Activated naive CD4-positive, alpha-beta T cell treated with anti-CD3 and anti-CD28 coated beads for 36 hours (primary cell): ENCODE measurements at regions of chr20 and their contacts with region 1.

Region 1: DNA sequence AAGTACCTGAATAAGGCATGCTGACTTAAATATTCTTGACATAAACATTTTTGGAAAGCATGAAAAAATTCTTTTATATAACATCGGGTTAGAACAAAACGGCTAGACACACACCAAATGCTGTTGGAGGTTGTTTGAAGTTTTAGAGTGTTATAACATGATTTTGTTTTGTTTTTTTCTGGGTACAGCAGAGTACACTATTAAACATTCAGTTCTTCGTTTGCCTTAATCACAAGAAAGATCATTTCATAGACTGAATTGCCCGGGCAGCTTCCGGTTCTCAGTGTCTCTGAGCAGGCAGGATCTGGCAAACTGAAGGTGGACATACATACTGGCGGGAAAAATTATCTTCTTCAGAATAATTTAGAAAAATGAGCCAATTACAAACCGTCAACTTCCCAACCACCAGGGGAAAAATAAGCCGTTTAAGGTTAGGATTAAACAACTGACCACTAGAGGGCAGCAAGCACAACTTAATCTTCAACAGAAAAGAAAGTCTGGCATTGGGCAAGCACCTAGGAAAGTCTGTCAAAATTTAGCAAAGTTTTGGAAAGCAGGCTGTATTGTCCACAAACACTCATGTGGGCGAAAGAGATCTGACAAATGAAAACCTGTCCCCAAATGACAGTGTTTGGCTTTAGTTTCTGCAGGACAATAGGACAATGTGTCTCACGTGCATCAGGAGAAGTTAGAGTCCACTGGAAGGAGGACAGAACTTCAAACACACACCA is 15.0 kb downstream of the ZNF217 start:
- DNase-seq: peak; percentile 77
- H3K4me3 Mint-ChIP-seq: peak overlapping the region; percentile 71
- H3K27ac Mint-ChIP-seq: peak overlapping the region; percentile 92
- H3K4me1 Mint-ChIP-seq: peaks cover 90% of the 10 kb centered on the region
- H3K27me3 Mint-ChIP-seq: no peaks in the 10 kb centered on the region

Region 2: DNA sequence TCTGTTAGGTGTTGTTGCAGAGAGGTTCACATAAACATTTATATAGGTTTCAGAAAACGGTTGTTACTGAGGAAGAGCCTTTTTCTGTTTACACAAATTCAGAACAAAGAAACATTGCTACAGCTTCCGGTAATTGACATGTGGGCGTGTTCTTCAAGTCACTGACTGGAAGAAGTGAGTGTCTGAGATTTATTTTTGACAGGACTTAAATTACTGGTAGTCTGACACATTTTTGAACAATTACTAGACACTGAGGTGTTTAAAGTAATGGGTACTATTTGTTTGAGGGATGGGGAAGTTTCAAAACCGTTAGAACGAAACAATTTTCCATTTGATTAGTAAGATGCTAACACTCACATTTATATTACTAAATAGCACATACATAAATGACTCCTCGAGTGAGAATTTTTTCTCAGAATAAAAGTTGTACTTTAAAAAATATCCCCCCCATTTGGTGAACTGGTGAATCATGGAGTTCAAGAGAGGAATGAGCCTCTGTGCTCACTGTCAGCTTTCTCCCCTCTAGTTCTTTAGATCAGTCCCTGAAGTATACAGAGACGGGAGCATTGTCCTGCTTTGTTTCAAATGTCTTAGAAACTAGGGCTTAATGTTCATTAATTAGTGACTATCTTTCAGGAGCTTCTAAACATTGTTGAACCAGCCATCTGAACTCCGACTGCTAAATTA is 507.8 kb before region 1 on chr20:
- CTCF ChIA-PET with region 1: no interaction called
- intact Hi-C with region 1: loop called (anchors 5 kb)
- DNase-seq: peak; percentile 80
- H3K4me3 Mint-ChIP-seq: peak overlapping the region; percentile 18
- H3K27ac Mint-ChIP-seq: peak overlapping the region; percentile 98
- H3K4me1 Mint-ChIP-seq: peaks cover 63% of the 10 kb centered on the region
- H3K27me3 Mint-ChIP-seq: no peaks in the 10 kb centered on the region

Region 3: DNA sequence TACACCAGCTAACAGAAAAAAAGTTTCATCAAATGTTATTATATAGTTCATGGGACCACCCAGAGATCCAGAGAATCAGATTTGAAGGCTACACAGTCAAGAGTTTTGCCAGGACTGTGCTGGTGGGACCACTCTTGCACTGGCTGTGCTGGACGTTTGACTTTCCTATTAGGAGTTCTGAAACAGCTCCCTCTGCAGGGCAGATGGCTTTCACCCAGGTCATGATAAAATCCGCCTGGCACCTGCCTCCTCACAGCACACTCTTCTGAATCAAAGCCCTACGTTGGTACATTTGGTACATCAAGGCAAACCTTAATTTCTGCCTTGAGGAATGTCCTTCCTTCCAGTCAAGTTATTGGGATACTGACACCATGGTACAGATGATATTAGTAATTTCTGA is 287.1 kb before region 1 on chr20:
- CTCF ChIA-PET with region 1: no interaction called
- intact Hi-C with region 1: no loop called
- DNase-seq: peak; percentile 13
- H3K4me3 Mint-ChIP-seq: no peak overlapping the region
- H3K27ac Mint-ChIP-seq: no peak overlapping the region
- H3K4me1 Mint-ChIP-seq: no peaks in the 10 kb centered on the region
- H3K27me3 Mint-ChIP-seq: no peaks in the 10 kb centered on the region

Region 4: DNA sequence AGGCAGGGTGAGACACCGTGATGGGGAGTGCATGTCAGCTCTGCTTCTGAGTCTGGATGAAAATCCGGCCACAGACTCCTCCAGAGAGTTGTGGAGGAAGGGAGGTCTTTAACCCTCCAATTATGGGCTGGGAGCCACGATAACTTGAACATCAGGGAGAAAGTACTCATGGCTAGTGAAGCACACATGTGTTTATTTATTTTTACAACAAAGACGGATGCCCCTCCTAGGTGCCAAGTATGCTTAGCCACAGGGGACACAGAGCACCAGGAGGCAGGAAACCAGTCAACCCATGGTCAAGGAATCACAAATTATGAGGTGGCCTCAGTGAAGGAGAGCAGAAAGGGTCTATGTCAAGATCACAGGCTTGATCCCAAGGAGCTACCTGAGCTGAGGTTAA is 39.1 kb before region 1 on chr20:
- CTCF ChIA-PET with region 1: no interaction called
- intact Hi-C with region 1: no loop called
- DNase-seq: no peak
- H3K4me3 Mint-ChIP-seq: no peak overlapping the region
- H3K27ac Mint-ChIP-seq: no peak overlapping the region
- H3K4me1 Mint-ChIP-seq: no peaks in the 10 kb centered on the region
- H3K27me3 Mint-ChIP-seq: no peaks in the 10 kb centered on the region

Region 5: DNA sequence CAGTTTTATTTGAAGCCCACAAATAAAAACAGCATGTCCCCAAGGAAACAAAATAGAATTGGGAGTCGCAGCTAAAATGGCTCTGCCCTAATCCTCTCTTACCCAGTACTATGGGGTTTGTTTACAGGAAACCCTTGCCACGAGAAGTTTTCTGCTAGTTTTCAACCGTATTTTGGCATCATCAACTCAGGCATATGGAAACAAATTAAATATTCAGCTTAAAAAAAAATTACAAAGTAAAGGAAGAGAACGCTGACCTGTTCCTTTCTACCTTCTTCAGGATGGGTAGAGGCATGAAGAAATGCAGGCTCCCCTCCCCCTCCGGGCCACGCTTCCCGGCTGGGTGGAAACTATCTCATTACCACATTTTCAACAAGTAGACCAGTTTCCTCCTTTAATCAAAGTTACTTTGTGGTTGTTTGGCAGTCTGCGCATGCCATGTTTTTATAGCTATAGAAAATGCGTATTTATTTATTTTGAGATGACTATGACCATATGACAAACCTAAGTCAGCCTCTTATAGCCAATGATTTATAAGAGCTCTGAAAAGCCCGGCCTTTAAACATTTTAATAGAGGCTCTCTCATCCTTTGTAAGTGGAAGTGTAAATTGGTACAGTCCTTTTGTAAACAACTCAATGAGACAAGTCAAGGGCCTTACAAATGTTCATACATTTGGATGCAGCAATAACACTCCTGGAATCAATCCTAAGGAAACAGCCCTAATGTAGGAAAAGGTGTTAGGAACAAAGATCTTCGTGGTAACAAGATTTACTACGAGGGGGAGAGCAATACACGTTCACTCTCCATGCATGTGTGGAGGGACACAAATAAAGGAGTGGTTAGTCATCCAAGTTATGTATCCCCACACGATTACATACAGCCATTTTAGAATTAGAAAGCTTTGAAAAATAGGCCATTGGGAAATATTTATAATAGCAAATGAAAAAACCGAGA is 31.1 kb after region 1 on chr20:
- CTCF ChIA-PET with region 1: interaction called, 3 read pairs
- intact Hi-C with region 1: loop called (anchors 1 kb)
- DNase-seq: peak; percentile 91
- H3K4me3 Mint-ChIP-seq: peak overlapping the region; percentile 79
- H3K27ac Mint-ChIP-seq: peak overlapping the region; percentile 98
- H3K4me1 Mint-ChIP-seq: peaks cover 33% of the 10 kb centered on the region
- H3K27me3 Mint-ChIP-seq: no peaks in the 10 kb centered on the region

Region 6: GRCh38 chr20:53652090-53652858 is 73.6 kb after region 1 on chr20:
- CTCF ChIA-PET with region 1: no interaction called
- intact Hi-C with region 1: loop called (anchors 2 kb)
- DNase-seq: peak; percentile 26
- H3K4me3 Mint-ChIP-seq: peak overlapping the region; percentile 65
- H3K27ac Mint-ChIP-seq: peak overlapping the region; percentile 93
- H3K4me1 Mint-ChIP-seq: peaks cover 43% of the 10 kb centered on the region
- H3K27me3 Mint-ChIP-seq: no peaks in the 10 kb centered on the region

Region 7: DNA sequence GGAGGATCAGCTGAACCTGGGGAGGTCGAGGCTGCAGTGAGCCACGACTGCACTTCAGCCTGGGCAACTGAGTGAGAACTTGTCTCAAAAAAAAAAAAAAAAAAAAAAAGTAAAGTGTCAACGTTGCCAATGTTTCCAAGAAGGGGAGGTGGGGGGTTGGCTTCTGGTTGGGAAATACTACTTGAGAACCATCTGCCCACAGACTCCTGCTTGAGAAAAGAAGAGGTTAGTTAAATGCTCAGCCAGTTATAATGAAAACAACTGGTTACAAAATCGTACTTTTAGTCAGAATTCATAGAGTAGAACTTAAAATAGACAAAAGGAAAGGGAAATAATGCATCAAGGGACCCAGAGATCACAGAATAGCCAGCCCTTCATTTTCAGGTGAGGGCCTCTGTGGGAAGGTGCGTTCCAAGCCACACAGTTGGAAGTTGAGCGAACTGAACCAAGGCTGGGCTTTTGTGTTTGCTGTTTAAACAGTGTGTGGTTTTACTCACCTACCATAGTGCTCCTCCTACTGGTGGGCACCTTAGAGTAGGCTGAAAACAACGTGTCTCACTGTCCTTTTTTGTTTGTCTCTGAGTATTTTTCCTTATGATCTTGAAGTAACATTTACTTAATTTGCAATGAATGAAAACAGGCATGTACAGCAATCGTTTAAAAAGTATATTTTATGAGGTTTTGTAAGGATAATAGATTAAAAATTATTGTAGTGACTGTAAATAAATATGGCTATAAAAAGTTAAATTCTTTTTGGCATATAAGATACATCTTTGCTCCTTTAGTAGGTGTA is 291.0 kb after region 1 on chr20:
- CTCF ChIA-PET with region 1: interaction called, 3 read pairs
- intact Hi-C with region 1: loop called (anchors 1 kb)
- DNase-seq: peak; percentile 85
- H3K4me3 Mint-ChIP-seq: peak overlapping the region; percentile 57
- H3K27ac Mint-ChIP-seq: peak overlapping the region; percentile 90
- H3K4me1 Mint-ChIP-seq: peaks cover 67% of the 10 kb centered on the region
- H3K27me3 Mint-ChIP-seq: no peaks in the 10 kb centered on the region

Region 8: GRCh38 chr20:53939572-53940359 is 361.1 kb after region 1 on chr20:
- CTCF ChIA-PET with region 1: interaction called, 13 read pairs
- intact Hi-C with region 1: loop called (anchors 1 kb)
- DNase-seq: peak; percentile 92
- H3K4me3 Mint-ChIP-seq: no peak overlapping the region
- H3K27ac Mint-ChIP-seq: no peak overlapping the region
- H3K4me1 Mint-ChIP-seq: peaks cover 38% of the 10 kb centered on the region
- H3K27me3 Mint-ChIP-seq: no peaks in the 10 kb centered on the region

Region 9: DNA sequence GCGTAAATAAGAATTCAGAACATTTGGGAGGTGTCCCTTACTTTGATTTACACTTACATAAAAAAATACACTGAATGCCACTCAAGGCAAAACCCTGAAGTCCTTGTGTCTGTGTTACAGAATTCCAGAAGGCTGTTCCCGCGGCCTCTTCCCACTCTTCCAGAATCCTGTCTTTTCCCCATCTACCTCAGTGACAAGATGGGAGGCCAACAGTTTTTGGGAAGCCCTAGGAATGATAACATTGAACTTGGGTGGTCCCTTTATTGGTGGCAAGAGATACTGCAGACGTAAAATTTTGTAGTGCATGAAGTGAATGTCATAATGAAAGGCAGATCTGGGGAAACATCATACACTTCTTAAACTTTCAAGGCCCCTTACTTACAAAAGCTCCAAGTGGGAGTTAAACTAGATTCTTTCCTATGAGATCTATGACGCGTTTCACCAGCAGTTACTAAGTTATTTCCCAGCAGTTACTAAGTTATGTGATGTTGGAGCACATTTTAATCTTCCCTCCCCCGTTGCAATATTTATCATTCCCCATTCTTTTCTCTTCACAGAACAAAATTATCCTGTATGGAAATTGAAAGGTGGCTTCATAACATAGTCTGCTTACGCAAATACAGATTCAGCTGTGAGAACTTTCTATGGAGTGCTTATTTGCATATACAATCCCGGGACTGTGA is 412.3 kb after region 1 on chr20:
- CTCF ChIA-PET with region 1: no interaction called
- intact Hi-C with region 1: no loop called
- DNase-seq: no peak
- H3K4me3 Mint-ChIP-seq: no peak overlapping the region
- H3K27ac Mint-ChIP-seq: no peak overlapping the region
- H3K4me1 Mint-ChIP-seq: no peaks in the 10 kb centered on the region
- H3K27me3 Mint-ChIP-seq: peaks cover 4% of the 10 kb centered on the region

Region 10: DNA sequence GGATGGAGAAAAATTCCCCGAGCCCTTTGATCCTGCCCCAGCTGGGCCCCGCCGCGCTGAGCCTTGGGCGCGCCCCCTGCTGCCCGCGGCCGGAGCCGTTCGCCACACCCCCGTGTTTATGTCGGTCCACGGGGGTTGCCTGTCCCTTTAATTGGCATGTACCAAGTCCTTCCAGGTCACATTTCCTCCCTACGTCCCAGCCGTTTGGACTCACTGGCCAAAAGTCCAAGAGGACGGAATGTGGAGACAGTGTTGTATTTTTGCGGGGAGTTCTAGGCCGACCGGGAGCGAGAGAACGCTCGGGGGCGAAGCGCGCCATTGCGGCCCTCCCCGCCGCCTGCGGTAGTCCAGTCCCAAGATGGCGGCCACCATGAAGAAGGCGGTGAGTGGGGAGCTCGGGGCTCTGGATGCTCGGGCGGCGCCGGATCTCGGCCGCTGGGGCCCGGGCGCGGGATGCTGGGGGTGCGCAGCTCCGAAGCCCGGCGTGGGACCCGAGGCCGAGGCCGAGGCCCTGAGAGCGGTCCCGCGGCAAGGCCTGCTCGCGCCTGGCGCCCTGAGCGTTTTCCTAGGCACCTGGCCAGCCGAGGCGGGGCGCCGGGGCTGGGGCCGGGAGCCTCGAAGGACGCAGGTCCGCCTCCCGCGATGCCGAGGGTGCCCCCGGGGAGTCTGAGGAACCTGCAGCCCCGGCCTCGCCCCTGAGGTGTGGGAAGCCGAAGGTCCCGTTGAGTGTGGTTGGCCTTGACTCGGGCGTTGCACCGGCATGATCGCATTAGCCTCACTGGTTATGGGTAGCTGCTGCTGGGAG is 629.3 kb after region 1 on chr20 and contains the start of gene PFDN4:
- CTCF ChIA-PET with region 1: no interaction called
- intact Hi-C with region 1: loop called (anchors 5 kb)
- DNase-seq: peak; percentile 86
- H3K4me3 Mint-ChIP-seq: peak within 1 kb of the TSS; percentile 90
- H3K27ac Mint-ChIP-seq: peak within 1 kb of the TSS; percentile 98
- H3K4me1 Mint-ChIP-seq: peaks cover 42% of the 10 kb centered on the region
- H3K27me3 Mint-ChIP-seq: no peaks in the 10 kb centered on the region
- total RNA-seq, gene PFDN4: 48.8 to 53.3 TPM